GM10248 (cell line): ENCODE measurements at regions of chr9 and their contacts with region 1.

Region 1: GRCh38 chr9:34637356-34638137 is at the start of gene SIGMAR1:
- DNase-seq: peak; percentile 93
- CTCF ChIP-seq: no peak

Region 2: DNA sequence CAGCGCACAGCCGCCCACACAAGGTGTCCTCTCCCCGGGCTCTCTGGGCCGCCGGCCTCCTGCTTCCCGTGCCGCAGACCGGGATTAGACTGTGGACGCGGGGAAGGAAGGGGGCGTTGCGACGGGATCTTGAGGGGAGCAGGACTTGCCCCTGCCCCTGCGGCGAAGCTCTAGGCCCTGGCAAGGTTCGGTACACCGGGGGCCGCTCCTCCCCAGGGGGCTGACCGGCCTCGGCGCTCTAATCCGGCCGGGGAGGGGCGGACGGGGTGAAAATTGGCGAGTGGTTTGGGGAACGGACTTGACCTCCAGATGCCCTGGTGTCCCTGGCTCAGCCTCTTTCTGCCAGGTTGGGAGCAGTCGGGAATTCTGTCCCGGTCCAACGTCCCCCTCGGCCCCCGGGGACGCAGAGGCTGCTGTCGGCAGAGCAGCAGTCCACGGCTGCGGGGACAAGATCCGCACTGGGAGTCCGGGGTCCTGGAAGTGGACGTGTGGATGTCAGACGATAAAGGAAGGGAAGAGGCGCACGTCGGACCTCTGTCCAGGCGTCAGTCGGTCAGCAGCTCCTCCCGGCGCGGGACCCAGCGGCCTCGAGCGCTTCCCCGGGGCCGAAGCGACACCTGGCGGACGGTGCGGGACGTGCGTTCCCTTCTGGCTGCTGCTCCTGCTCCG is 46.2 kb before region 1 on chr9:
- CTCF ChIA-PET with region 1: interaction called, 39 read pairs
- POLR2A ChIA-PET with region 1: no interaction called
- DNase-seq: peak; percentile 91
- CTCF ChIP-seq: peak; percentile 95

Region 3: GRCh38 chr9:34611829-34612630 is 25.5 kb before region 1 on chr9 and contains the start of gene RPP25L:
- CTCF ChIA-PET with region 1: interaction called, 328 read pairs
- POLR2A ChIA-PET with region 1: no interaction called
- DNase-seq: peak; percentile 96
- CTCF ChIP-seq: no peak

Region 4: GRCh38 chr9:34620061-34620994 is 17.2 kb before region 1 on chr9 and contains the start of gene DCTN3:
- CTCF ChIA-PET with region 1: interaction called, 328 read pairs
- POLR2A ChIA-PET with region 1: interaction called, 3 read pairs
- DNase-seq: peak; percentile 97
- CTCF ChIP-seq: no peak

Region 5: GRCh38 chr9:34651876-34652601 is 14.5 kb after region 1 on chr9 and contains the start of gene IL11RA:
- CTCF ChIA-PET with region 1: interaction called, 112 read pairs
- POLR2A ChIA-PET with region 1: interaction called, 9 read pairs
- DNase-seq: no peak
- CTCF ChIP-seq: no peak

Region 6: GRCh38 chr9:34665381-34666250 is 28.1 kb after region 1 on chr9:
- CTCF ChIA-PET with region 1: interaction called, 84 read pairs
- POLR2A ChIA-PET with region 1: interaction called, 4 read pairs
- DNase-seq: peak; percentile 94
- CTCF ChIP-seq: no peak

Region 7: GRCh38 chr9:34709196-34709978 is 71.8 kb after region 1 on chr9:
- CTCF ChIA-PET with region 1: no interaction called
- POLR2A ChIA-PET with region 1: no interaction called
- DNase-seq: no peak
- CTCF ChIP-seq: no peak

Region 8: DNA sequence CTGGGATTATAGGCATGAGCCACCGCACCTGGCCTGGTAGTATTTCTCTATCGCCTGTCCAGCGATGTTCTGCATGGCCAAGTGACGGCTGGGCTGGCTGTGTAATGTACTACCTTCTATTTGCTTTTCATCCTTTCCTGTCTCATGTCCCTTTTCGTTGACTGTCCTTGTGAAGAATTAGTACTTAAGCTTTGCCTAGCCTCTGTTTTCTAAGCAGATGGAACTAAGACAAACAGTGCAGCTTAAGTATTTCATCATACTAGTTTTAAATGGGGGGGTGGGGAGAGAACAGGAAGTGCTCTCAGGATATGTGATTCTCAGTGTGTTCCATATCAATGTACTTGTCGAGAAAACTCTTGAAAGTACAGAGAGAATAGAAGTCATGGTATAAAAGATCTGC is 104.1 kb after region 1 on chr9:
- CTCF ChIA-PET with region 1: no interaction called
- POLR2A ChIA-PET with region 1: no interaction called
- DNase-seq: no peak
- CTCF ChIP-seq: no peak